CD4-positive, alpha-beta memory T cell (primary cell): ENCODE measurements at regions of chr10 and their contacts with region 1.

Region 1: GRCh38 chr10:98414932-98415730 is at the start of gene PYROXD2:
- DNase-seq: peak; percentile 50 to 62 (median 57)
- H3K4me3 ChIP-seq: peak within 1 kb of the TSS; percentile 39 to 47
- H3K4me3 Mint-ChIP-seq: peak within 1 kb of the TSS; percentile 89 to 98 (median 94)
- H3K27ac ChIP-seq: peak within 1 kb of the TSS; percentile 47
- H3K27ac Mint-ChIP-seq: peak within 1 kb of the TSS; percentile 86 to 97 (median 93)
- H3K4me1 ChIP-seq: peaks cover 16% of the 10 kb centered on the region
- H3K4me1 Mint-ChIP-seq: peaks cover 12 to 26% (median 19%) of the 10 kb centered on the region in 4 donors
- H3K27me3 ChIP-seq: no peaks in the 10 kb centered on the region
- H3K27me3 Mint-ChIP-seq: no peaks in the 10 kb centered on the region
- total RNA-seq, gene PYROXD2: 36.2 to 36.6 TPM

Region 2: GRCh38 chr10:98006266-98006665 is 408.9 kb before region 1 on chr10:
- CTCF ChIA-PET with region 1: no interaction called
- POLR2A ChIA-PET with region 1: no interaction called
- intact Hi-C with region 1: no loop called
- DNase-seq: no peak
- H3K4me3 ChIP-seq: no peak overlapping the region
- H3K4me3 Mint-ChIP-seq: no peak overlapping the region
- H3K27ac ChIP-seq: no peak overlapping the region
- H3K27ac Mint-ChIP-seq: no peak overlapping the region
- H3K4me1 ChIP-seq: no peaks in the 10 kb centered on the region
- H3K4me1 Mint-ChIP-seq: peaks cover 4 to 6% (median 5%) of the 10 kb centered on the region in 4 donors
- H3K27me3 ChIP-seq: no peaks in the 10 kb centered on the region
- H3K27me3 Mint-ChIP-seq: peaks cover 10 to 28% of the 10 kb centered on the region in 2 donors

Region 3: GRCh38 chr10:98404571-98405359 is 10.4 kb before region 1 on chr10:
- CTCF ChIA-PET with region 1: no interaction called
- POLR2A ChIA-PET with region 1: no interaction called
- intact Hi-C with region 1: no loop called
- DNase-seq: no peak
- H3K4me3 ChIP-seq: no peak overlapping the region
- H3K4me3 Mint-ChIP-seq: no peak overlapping the region
- H3K27ac ChIP-seq: no peak overlapping the region
- H3K27ac Mint-ChIP-seq: peak overlapping the region in 1 of 7 donors; percentile 43
- H3K4me1 ChIP-seq: no peaks in the 10 kb centered on the region
- H3K4me1 Mint-ChIP-seq: peaks cover 0 to 8% (median 0%) of the 10 kb centered on the region in 4 donors
- H3K27me3 ChIP-seq: no peaks in the 10 kb centered on the region
- H3K27me3 Mint-ChIP-seq: peaks cover 0 to 1% of the 10 kb centered on the region in 2 donors

Region 4: DNA sequence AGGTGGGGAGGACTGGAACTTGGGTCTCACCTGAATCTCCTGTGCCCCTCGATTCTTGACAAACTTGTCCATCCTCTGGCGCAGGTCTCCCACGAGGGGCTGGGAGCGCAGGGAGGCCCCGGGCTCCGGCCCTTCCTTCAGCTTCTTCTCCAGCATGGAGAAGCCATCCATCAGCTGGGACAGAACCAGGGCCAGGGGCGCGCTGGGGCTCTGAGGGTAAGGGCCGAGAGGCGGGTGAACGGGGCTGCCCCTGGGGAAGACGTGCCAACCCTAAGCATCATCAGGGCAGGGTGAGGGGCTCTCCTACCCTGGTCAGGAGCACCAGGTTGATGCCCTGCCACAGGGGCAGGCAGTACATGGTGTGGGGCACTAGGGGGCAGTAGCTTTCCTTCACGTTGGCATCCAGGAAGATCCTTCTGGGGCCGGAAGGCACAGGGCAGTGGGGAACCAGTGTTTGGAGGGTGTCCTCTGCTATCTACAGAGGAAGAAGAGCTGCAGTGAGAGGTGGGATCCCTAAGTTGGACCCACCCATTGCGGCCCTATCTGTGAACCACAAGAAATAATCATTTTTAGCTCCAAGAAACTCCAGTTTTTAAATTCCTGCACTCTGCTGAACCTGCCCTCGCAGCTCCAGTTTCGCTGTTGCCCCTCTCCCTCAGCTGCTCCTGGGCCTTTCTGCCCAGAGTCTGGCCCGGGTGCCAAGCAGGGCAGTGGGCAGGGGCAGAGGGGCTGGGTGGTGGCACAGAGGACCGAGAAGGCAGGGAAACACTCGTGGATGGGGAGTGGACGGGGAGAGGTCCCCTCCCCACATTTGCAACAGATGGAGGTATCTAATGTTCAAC is 10.6 kb after region 1 on chr10:
- CTCF ChIA-PET with region 1: interaction called, 14 read pairs
- POLR2A ChIA-PET with region 1: interaction called, 9 read pairs
- intact Hi-C with region 1: no loop called
- DNase-seq: peak; percentile 19 to 50 (median 38)
- H3K4me3 ChIP-seq: no peak overlapping the region
- H3K4me3 Mint-ChIP-seq: no peak overlapping the region
- H3K27ac ChIP-seq: no peak overlapping the region
- H3K27ac Mint-ChIP-seq: peak overlapping the region in 2 of 7 donors; percentile 25 to 47
- H3K4me1 ChIP-seq: no peaks in the 10 kb centered on the region
- H3K4me1 Mint-ChIP-seq: peaks cover 0 to 3% (median 0%) of the 10 kb centered on the region in 4 donors
- H3K27me3 ChIP-seq: no peaks in the 10 kb centered on the region
- H3K27me3 Mint-ChIP-seq: no peaks in the 10 kb centered on the region

Region 5: GRCh38 chr10:98446661-98447221 is 31.6 kb after region 1 on chr10 and contains the start of gene HPS1:
- CTCF ChIA-PET with region 1: no interaction called
- POLR2A ChIA-PET with region 1: no interaction called
- intact Hi-C with region 1: loop called (anchors 1 kb)
- DNase-seq: peak; percentile 64 to 78 (median 78)
- H3K4me3 ChIP-seq: peak within 1 kb of the TSS; percentile 73 to 84
- H3K4me3 Mint-ChIP-seq: peak within 1 kb of the TSS; percentile 88 to 95 (median 94)
- H3K27ac ChIP-seq: peak within 1 kb of the TSS; percentile 76
- H3K27ac Mint-ChIP-seq: peak within 1 kb of the TSS; percentile 89 to 95 (median 93)
- H3K4me1 ChIP-seq: peaks cover 41% of the 10 kb centered on the region
- H3K4me1 Mint-ChIP-seq: peaks cover 29 to 58% (median 42%) of the 10 kb centered on the region in 4 donors
- H3K27me3 ChIP-seq: no peaks in the 10 kb centered on the region
- H3K27me3 Mint-ChIP-seq: no peaks in the 10 kb centered on the region
- total RNA-seq, gene HPS1: 106 to 115 TPM

Region 6: DNA sequence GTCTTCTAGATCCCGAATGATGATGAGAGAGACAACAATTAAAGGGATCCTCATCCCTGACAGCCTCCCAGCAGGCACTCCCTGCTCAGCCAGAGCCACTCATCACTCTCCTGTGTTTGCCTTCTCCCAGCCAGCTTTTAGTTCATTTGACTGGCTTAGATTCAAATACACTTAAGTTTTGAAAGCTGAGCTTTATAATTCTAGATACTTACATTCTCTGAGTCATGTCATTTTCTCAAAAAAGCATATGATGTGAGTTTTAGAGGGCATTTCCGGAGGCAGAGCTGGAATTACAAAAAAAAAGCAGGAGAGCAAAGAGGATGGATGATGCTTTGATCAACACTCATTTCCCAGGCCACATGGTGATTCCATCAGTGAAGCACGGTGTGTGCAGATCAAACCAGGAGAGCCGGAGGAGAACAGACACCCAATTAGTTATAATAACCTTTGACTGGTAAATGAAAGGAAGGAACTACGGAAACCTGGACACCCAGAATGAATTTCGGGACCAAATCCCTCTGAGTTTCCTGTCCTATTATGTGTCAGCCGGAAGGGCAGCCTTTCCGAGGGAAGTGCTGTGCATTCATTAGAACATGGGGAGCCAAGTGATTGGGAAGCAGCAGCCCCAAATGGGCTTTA is 113.2 kb after region 1 on chr10:
- CTCF ChIA-PET with region 1: no interaction called
- POLR2A ChIA-PET with region 1: no interaction called
- intact Hi-C with region 1: no loop called
- DNase-seq: no peak
- H3K4me3 ChIP-seq: no peak overlapping the region
- H3K4me3 Mint-ChIP-seq: no peak overlapping the region
- H3K27ac ChIP-seq: no peak overlapping the region
- H3K27ac Mint-ChIP-seq: no peak overlapping the region
- H3K4me1 ChIP-seq: no peaks in the 10 kb centered on the region
- H3K4me1 Mint-ChIP-seq: peaks cover 0 to 5% (median 0%) of the 10 kb centered on the region in 4 donors
- H3K27me3 ChIP-seq: no peaks in the 10 kb centered on the region
- H3K27me3 Mint-ChIP-seq: peaks cover 3 to 4% of the 10 kb centered on the region in 2 donors